GM10248 (cell line): ENCODE measurements at regions of chr16 and their contacts with region 1.

Region 1: DNA sequence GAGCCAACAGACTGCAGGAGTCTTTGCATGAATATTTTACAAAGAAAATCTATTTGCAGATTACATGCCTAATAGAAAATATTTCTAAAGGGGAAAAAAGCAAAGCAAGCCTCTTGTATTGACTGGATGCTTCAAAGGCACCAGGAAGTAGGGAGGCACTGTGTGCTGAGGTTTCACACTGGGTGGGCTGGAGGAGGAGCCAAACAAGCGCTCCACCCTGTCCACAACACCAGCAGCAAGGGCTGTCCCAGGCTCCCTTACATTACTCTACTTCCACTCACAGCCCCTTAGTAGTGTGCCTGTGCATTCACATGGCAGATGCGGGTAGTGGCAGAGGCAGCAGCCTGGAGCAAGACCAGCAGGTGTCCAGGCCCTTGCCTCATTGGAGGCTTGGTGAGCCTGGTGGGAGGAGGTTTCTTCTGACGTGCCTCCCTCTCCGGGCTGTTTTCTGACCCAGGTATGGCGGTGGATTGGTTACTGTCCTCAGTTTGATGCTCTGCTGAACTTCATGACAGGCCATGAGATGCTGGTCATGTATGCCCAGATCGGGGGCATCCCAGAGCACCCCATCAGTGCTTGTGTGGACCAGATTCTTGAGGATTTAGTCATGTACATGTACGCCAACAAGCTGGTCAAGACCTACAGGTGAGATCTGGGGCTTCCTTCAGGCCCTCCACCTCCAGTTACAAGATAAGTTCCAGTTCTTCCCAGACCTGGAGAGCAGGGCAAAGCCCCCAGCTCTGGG is 7.0 kb upstream of the CCNF start:
- DNase-seq: peak; percentile 10
- CTCF ChIP-seq: no peak

Region 2: GRCh38 chr16:2443555-2443954 is 21.3 kb after region 1 on chr16:
- CTCF ChIA-PET with region 1: interaction called, 12 read pairs
- POLR2A ChIA-PET with region 1: no interaction called
- DNase-seq: no peak
- CTCF ChIP-seq: no peak